ENCODE measurements at regions of chr12 and their contacts with region 1.

Region 1: GRCh38 chr12:45215419-45216229 is at the start of gene ANO6:
- DNase-seq: peak; percentile 85 to 93
- ATAC-seq: peak; percentile 87 to 94 (median 89)
- H3K4me3 ChIP-seq: peak within 1 kb of the TSS; percentile 98
- H3K27ac ChIP-seq: peak within 1 kb of the TSS; percentile 98
- H3K4me1 ChIP-seq: peaks cover 27% of the 10 kb centered on the region
- H3K27me3 ChIP-seq: no peaks in the 10 kb centered on the region
- CTCF ChIP-seq: no peak
- total RNA-seq, gene ANO6: 51.5 to 121 (median 65.5) TPM

Region 2: DNA sequence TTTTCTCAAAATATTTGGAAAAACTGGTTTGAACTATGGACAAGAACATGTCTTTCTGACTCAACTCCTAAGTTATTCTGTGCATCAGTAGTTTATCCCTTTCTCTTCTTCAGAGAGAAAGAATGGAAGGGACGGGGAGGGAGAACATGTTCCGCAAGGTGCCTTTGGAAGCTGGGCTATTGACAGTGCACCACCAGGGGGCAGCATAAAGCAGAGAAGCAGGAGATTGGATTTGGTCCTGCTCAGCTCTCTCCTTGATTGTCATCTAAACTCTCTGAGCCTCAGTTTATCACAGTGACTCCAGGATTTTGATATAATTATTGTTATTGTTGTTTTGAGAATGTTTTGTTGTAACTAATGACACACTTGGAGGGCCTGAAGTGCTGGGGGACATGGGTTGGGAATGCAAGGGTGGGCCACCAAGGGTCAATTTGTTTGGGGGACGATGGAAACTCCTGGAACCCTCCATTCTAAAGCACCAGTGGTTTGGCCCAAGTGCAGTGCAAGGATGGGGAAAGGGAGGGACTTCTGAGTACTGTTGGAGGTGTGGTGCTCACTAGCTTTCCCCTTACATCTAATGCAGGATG is 45.1 kb before region 1 on chr12:
- intact Hi-C with region 1: loop called in 1 of 2 experiments (anchors 5 kb)
- DNase-seq: peak; percentile 81 to 86
- ATAC-seq: peak; percentile 73 to 89 (median 84)
- H3K4me3 ChIP-seq: no peak overlapping the region
- H3K27ac ChIP-seq: no peak overlapping the region
- H3K4me1 ChIP-seq: peaks cover 22% of the 10 kb centered on the region
- H3K27me3 ChIP-seq: no peaks in the 10 kb centered on the region
- CTCF ChIP-seq: peak; percentile 95

Region 3: DNA sequence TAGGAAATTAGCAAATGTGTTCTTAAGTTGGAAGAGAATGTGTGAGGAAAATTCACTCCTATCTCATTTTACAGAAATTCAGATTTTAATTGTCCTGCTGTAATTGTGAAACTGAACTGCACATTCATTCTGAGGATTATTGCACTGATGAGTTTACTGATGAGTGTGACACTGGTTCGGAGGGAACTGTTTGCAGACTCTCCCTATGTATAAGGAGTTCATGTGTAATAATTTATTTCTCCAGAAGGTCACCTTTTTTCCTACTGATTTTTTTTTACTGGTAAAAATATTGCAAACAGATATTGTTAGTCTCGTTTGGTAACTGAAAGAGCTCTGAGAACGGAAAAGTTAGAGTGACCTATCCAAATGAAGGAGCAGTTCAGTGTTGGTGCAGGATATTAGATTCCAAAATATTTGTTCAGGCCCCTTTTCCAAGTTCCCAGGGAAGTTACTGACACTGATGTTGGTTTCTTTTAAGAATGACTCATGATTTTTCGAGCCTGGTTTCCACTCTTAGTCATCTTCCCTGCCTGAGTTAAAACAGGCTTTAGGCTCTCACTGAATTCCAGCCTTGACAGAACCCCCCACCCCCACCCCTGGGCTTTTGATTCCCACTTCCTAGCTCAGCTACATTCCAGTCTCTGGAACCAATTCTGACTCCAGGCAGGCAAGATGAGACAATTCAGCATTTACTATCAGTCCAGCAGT is 18.7 kb after region 1 on chr12:
- intact Hi-C with region 1: loop called in 1 of 2 experiments (anchors 1 kb)
- DNase-seq: peak in 1 of 2 donors; percentile 38
- ATAC-seq: peak; percentile 73 to 79 (median 76)
- H3K4me3 ChIP-seq: peak overlapping the region; percentile 37
- H3K27ac ChIP-seq: peak overlapping the region; percentile 98
- H3K4me1 ChIP-seq: peaks cover 56% of the 10 kb centered on the region
- H3K27me3 ChIP-seq: no peaks in the 10 kb centered on the region
- CTCF ChIP-seq: no peak

Region 4: DNA sequence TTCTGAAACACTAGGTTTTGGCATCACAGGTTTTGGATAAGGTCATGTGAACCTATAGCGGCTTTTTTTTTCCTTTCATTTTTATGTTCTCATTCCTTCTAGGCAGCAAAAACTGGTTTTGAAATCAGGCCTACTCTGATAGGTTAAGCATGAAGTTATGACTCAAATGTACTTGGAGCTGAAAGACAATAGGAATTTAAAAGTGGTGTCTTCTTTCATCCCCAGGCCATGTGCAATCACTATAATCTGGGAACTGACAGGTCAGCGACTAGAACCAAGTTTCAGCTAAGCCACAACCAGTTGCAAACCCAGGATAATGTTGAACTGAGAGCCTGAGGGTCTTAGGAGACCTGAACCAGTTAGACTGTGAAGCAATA is 74.6 kb after region 1 on chr12:
- intact Hi-C with region 1: loop called in 1 of 2 experiments (anchors 5 kb)
- DNase-seq: no peak
- ATAC-seq: peak; percentile 81 to 92 (median 88)
- H3K4me3 ChIP-seq: no peak overlapping the region
- H3K27ac ChIP-seq: peak overlapping the region; percentile 89
- H3K4me1 ChIP-seq: peaks cover 25% of the 10 kb centered on the region
- H3K27me3 ChIP-seq: no peaks in the 10 kb centered on the region
- CTCF ChIP-seq: no peak

Region 5: GRCh38 chr12:45336331-45337064 is 120.9 kb after region 1 on chr12:
- intact Hi-C with region 1: loop called in 1 of 2 experiments (anchors 10 kb)
- DNase-seq: no peak
- ATAC-seq: peak; percentile 71 to 79 (median 77)
- H3K4me3 ChIP-seq: no peak overlapping the region
- H3K27ac ChIP-seq: peak overlapping the region; percentile 70
- H3K4me1 ChIP-seq: peaks cover 29% of the 10 kb centered on the region
- H3K27me3 ChIP-seq: no peaks in the 10 kb centered on the region
- CTCF ChIP-seq: no peak

Region 6: GRCh38 chr12:45388545-45388944 is 172.9 kb after region 1 on chr12:
- intact Hi-C with region 1: loop called in 1 of 2 experiments (anchors 10 kb)
- DNase-seq: no peak
- ATAC-seq: peak in 2 of 4 donors; percentile 59 to 60
- H3K4me3 ChIP-seq: no peak overlapping the region
- H3K27ac ChIP-seq: no peak overlapping the region
- H3K4me1 ChIP-seq: no peaks in the 10 kb centered on the region
- H3K27me3 ChIP-seq: no peaks in the 10 kb centered on the region
- CTCF ChIP-seq: peak; percentile 49